ENCODE measurements at regions of chr12 and their contacts with region 1.

Region 1: GRCh38 chr12:12356886-12357718 is at the start of gene BORCS5:
- DNase-seq: peak; percentile 94 to 99 (median 97)
- ATAC-seq: peak; percentile 96
- H3K4me3 ChIP-seq: peak within 1 kb of the TSS; percentile 85
- H3K4me3 Mint-ChIP-seq: peak within 1 kb of the TSS; percentile 90 to 99 (median 96)
- H3K27ac ChIP-seq: peak within 1 kb of the TSS; percentile 99
- H3K27ac Mint-ChIP-seq: peak within 1 kb of the TSS; percentile 92 to 99 (median 98)
- H3K4me1 ChIP-seq: peaks cover 14 to 28% of the 10 kb centered on the region in 2 donors
- H3K4me1 Mint-ChIP-seq: peaks cover 31 to 74% (median 64%) of the 10 kb centered on the region in 7 donors
- H3K27me3 ChIP-seq: no peaks in the 10 kb centered on the region
- H3K27me3 Mint-ChIP-seq: no peaks in the 10 kb centered on the region
- total RNA-seq, gene BORCS5: 15.3 to 28.2 (median 22.1) TPM

Region 2: GRCh38 chr12:11171145-11171968 is 1185.7 kb before region 1 on chr12 and contains the start of gene SMIM10L1:
- CTCF ChIA-PET with region 1: no interaction called
- POLR2A ChIA-PET with region 1: no interaction called
- intact Hi-C with region 1: loop called (anchors 2 to 10 kb)
- DNase-seq: peak; percentile 77 to 88 (median 83)
- ATAC-seq: peak; percentile 97
- H3K4me3 ChIP-seq: peak within 1 kb of the TSS; percentile 74
- H3K4me3 Mint-ChIP-seq: peak within 1 kb of the TSS; percentile 94 to 100 (median 98)
- H3K27ac ChIP-seq: peak within 1 kb of the TSS; percentile 72
- H3K27ac Mint-ChIP-seq: peak within 1 kb of the TSS; percentile 97 to 100 (median 99)
- H3K4me1 ChIP-seq: peaks cover 30 to 36% of the 10 kb centered on the region in 2 donors
- H3K4me1 Mint-ChIP-seq: peaks cover 53 to 82% (median 72%) of the 10 kb centered on the region in 7 donors
- H3K27me3 ChIP-seq: no peaks in the 10 kb centered on the region
- H3K27me3 Mint-ChIP-seq: no peaks in the 10 kb centered on the region
- total RNA-seq, gene SMIM10L1: 7.8 to 12.9 (median 8.5) TPM

Region 3: GRCh38 chr12:12123036-12123604 is 234.0 kb before region 1 on chr12:
- CTCF ChIA-PET with region 1: no interaction called
- POLR2A ChIA-PET with region 1: no interaction called
- intact Hi-C with region 1: no loop called
- DNase-seq: no peak
- ATAC-seq: no peak
- H3K4me3 ChIP-seq: no peak overlapping the region
- H3K4me3 Mint-ChIP-seq: no peak overlapping the region
- H3K27ac ChIP-seq: no peak overlapping the region
- H3K27ac Mint-ChIP-seq: no peak overlapping the region
- H3K4me1 ChIP-seq: no peaks in the 10 kb centered on the region
- H3K4me1 Mint-ChIP-seq: peaks cover 0 to 4% (median 0%) of the 10 kb centered on the region in 7 donors
- H3K27me3 ChIP-seq: no peaks in the 10 kb centered on the region
- H3K27me3 Mint-ChIP-seq: no peaks in the 10 kb centered on the region

Region 4: GRCh38 chr12:12334367-12335040 is 22.6 kb before region 1 on chr12:
- CTCF ChIA-PET with region 1: interaction called, 7 read pairs
- POLR2A ChIA-PET with region 1: interaction called, 17 read pairs
- intact Hi-C with region 1: loop called in 1 of 2 experiments (anchors 1 kb)
- DNase-seq: peak; percentile 36 to 65 (median 50)
- ATAC-seq: peak; percentile 87
- H3K4me3 ChIP-seq: no peak overlapping the region
- H3K4me3 Mint-ChIP-seq: peak overlapping the region in 6 of 10 donors; percentile 12 to 45 (median 27)
- H3K27ac ChIP-seq: no peak overlapping the region
- H3K27ac Mint-ChIP-seq: peak overlapping the region in 8 of 9 donors; percentile 35 to 84 (median 56)
- H3K4me1 ChIP-seq: peaks cover 0 to 10% of the 10 kb centered on the region in 2 donors
- H3K4me1 Mint-ChIP-seq: peaks cover 15 to 44% (median 34%) of the 10 kb centered on the region in 7 donors
- H3K27me3 ChIP-seq: no peaks in the 10 kb centered on the region
- H3K27me3 Mint-ChIP-seq: no peaks in the 10 kb centered on the region

Region 5: DNA sequence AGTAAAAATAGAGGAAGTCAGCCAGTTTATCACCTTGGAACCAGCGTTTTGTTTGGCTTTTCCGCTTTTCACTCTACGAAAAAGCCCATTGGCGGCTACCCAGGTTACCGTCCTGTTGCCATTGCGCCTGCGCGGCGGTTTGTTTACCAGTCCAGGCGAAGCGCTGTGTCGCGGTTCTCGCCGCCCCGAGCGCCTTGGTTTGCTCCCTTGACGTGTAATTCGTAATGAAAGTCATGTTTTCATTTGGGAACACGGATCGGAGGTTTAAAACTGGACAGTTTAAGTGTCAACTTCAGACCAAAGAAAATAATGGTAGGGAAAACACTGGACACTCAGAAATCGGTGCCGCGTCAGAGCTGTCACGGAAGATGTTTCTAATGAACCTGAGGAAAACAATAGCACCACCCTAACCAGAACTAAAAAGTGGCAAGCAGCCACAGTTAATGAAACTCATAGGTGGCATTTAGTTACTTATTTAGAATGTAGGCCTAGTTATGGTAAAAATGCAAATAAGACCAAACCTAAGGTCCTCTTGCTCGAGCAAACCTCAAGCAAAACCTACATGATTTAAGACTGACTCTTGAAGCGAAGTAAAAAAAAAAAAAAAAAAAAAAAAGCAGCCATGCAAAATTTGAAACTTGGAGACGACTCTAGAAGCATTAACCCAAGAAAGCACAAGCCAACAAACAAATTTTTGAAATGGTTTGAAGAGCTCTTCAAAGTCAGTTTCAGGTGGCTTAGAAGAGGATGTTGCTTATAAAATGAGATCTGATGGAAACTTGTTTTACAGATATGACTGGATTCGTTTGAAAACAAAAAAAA is 339.7 kb after region 1 on chr12:
- CTCF ChIA-PET with region 1: interaction called, 3 read pairs
- POLR2A ChIA-PET with region 1: interaction called, 18 read pairs
- intact Hi-C with region 1: loop called (anchors 1 kb)
- DNase-seq: peak; percentile 86 to 97 (median 92)
- ATAC-seq: peak; percentile 92
- H3K4me3 ChIP-seq: peak overlapping the region; percentile 63
- H3K4me3 Mint-ChIP-seq: peak overlapping the region; percentile 79 to 99 (median 95)
- H3K27ac ChIP-seq: peak overlapping the region; percentile 93
- H3K27ac Mint-ChIP-seq: peak overlapping the region; percentile 95 to 100 (median 100)
- H3K4me1 ChIP-seq: peaks cover 11 to 16% of the 10 kb centered on the region in 2 donors
- H3K4me1 Mint-ChIP-seq: peaks cover 24 to 63% (median 33%) of the 10 kb centered on the region in 7 donors
- H3K27me3 ChIP-seq: no peaks in the 10 kb centered on the region
- H3K27me3 Mint-ChIP-seq: no peaks in the 10 kb centered on the region

Region 6: DNA sequence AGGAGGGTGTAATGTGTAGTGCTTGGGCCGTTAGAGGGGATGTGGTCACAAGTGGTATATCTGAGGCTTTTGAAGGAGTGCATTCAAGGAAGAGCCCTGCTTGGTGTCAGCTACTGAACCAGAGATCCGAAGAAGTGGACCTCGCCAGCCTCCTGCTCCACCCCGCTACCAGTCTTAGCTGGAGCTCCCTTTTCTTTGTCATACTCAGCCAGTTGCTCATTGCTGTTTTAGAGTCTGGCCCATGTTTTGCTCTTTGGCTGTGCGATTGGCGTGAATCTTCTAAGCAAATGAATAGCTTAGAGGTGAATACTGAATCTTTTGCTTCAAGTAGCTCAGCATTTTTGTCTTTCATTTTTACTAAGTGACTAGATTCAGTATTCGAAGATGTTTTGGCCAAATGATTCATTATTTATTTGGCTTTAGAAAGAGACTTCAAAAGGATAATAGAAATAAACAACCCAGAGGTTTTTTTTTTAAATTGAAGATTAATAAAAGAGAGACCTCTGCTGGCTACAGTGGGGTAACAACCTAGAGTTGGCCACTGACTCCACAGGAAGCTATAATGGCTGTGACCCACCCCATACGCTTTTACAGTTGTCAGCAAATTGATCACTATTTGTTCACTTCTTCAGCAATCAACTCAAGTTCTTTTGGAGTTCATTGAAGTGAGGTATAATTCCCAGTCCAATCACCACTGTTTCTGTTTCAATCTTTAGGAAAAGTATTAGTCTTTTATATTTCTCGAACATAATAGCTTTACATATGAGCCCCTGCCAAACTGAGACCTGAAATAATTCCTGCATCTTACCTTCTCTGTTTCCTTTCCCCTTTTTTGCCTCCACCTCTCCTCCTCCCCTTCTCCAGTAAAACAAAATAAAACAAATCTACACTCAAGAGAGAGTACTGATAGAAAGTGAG is 379.9 kb after region 1 on chr12:
- CTCF ChIA-PET with region 1: interaction called, 5 read pairs
- POLR2A ChIA-PET with region 1: interaction called, 29 read pairs
- intact Hi-C with region 1: no loop called
- DNase-seq: peak in 7 of 9 donors; percentile 32 to 59 (median 39)
- ATAC-seq: peak; percentile 93
- H3K4me3 ChIP-seq: peak overlapping the region; percentile 28
- H3K4me3 Mint-ChIP-seq: peak overlapping the region; percentile 53 to 82 (median 68)
- H3K27ac ChIP-seq: peak overlapping the region; percentile 54
- H3K27ac Mint-ChIP-seq: peak overlapping the region; percentile 75 to 93 (median 85)
- H3K4me1 ChIP-seq: peaks cover 9 to 33% of the 10 kb centered on the region in 2 donors
- H3K4me1 Mint-ChIP-seq: peaks cover 21 to 65% (median 35%) of the 10 kb centered on the region in 7 donors
- H3K27me3 ChIP-seq: no peaks in the 10 kb centered on the region
- H3K27me3 Mint-ChIP-seq: no peaks in the 10 kb centered on the region

Region 7: GRCh38 chr12:12999959-13000615 is 643.0 kb after region 1 on chr12 and contains the start of gene HEBP1:
- CTCF ChIA-PET with region 1: no interaction called
- POLR2A ChIA-PET with region 1: no interaction called
- intact Hi-C with region 1: loop called (anchors 1 to 5 kb)
- DNase-seq: peak; percentile 86 to 99 (median 93)
- ATAC-seq: peak; percentile 97
- H3K4me3 ChIP-seq: peak within 1 kb of the TSS; percentile 74
- H3K4me3 Mint-ChIP-seq: peak within 1 kb of the TSS; percentile 90 to 98 (median 95)
- H3K27ac ChIP-seq: peak within 1 kb of the TSS; percentile 83
- H3K27ac Mint-ChIP-seq: peak within 1 kb of the TSS; percentile 53 to 96 (median 90)
- H3K4me1 ChIP-seq: peaks cover 8 to 23% of the 10 kb centered on the region in 2 donors
- H3K4me1 Mint-ChIP-seq: peaks cover 30 to 45% (median 35%) of the 10 kb centered on the region in 7 donors
- H3K27me3 ChIP-seq: peaks cover 0 to 5% of the 10 kb centered on the region in 2 donors
- H3K27me3 Mint-ChIP-seq: peaks cover 0 to 31% (median 0%) of the 10 kb centered on the region in 5 donors
- total RNA-seq, gene HEBP1: 10.9 to 23.4 (median 13.6) TPM